IMR-90 (cell line): ENCODE measurements at regions of chr6 and their contacts with region 1.

Region 1: DNA sequence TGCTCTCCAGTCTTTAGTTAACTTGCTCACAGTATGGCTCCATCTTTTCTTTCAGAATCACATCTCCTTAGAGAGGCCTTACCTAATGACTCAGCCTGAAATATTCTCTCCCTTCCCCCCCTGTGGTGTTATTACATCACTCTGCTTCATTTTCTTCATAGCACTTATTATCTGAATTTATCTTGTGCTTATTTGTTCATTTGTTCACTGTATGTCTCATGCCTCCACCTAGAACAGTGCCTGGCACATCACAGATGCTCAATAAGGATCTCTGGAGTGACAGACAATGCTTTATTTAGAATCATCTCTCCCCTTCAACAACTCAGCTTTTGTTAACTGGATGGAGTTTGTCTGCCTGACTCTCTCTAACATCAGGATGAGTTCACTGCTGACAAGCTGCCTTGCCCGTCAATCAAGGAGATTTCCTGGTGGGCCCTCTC is 96.6 kb upstream of the MAN1A1 start:
- DNase-seq: peak; percentile 68
- ATAC-seq: peak; percentile 73
- H3K4me3 ChIP-seq: no peak overlapping the region
- H3K27ac ChIP-seq: no peak overlapping the region; the same call in 1 of the 2 replicates
- H3K4me1 ChIP-seq: peaks cover 7% of the 10 kb centered on the region
- H3K27me3 ChIP-seq: no peaks in the 10 kb centered on the region
- CTCF ChIP-seq: no peak
- POLR2A ChIP-seq: no peak
- RAD21 ChIP-seq: no peak

Region 2: GRCh38 chr6:119129968-119130484 is 316.1 kb before region 1 on chr6:
- CTCF ChIA-PET with region 1: no interaction called
- POLR2A ChIA-PET with region 1: no interaction called
- dilution Hi-C with region 1: no loop called
- in situ Hi-C with region 1: no loop called
- intact Hi-C with region 1: loop called (anchors 5 kb)
- DNase-seq: peak; percentile 76
- ATAC-seq: peak; percentile 75
- H3K4me3 ChIP-seq: no peak overlapping the region
- H3K27ac ChIP-seq: no peak overlapping the region
- H3K4me1 ChIP-seq: 0 out of 2 replicates have a peak, but pooled peaks cover 3% of the 10 kb centered on the region
- H3K27me3 ChIP-seq: peaks cover 2% of the 10 kb centered on the region; the same call in 1 of the 2 replicates
- CTCF ChIP-seq: no peak
- POLR2A ChIP-seq: no peak
- RAD21 ChIP-seq: no peak

Region 3: GRCh38 chr6:120290964-120291363 is 844.8 kb after region 1 on chr6:
- CTCF ChIA-PET with region 1: no interaction called
- POLR2A ChIA-PET with region 1: no interaction called
- dilution Hi-C with region 1: no loop called
- in situ Hi-C with region 1: no loop called
- intact Hi-C with region 1: no loop called
- DNase-seq: no peak
- ATAC-seq: no peak
- H3K4me3 ChIP-seq: no peak overlapping the region
- H3K27ac ChIP-seq: no peak overlapping the region
- H3K4me1 ChIP-seq: no peaks in the 10 kb centered on the region
- H3K27me3 ChIP-seq: no peaks in the 10 kb centered on the region
- CTCF ChIP-seq: no peak
- POLR2A ChIP-seq: no peak
- RAD21 ChIP-seq: no peak